Left cardiac atrium (tissue), 4 donors: ENCODE measurements at regions of chr18 and their contacts with region 1.

Region 1: GRCh38 chr18:62584241-62585120 is 61.7 kb downstream of the ZCCHC2 start:
- DNase-seq: peak; percentile 85
- ATAC-seq: peak; percentile 88 to 93

Region 2: GRCh38 chr18:61581578-61582201 is 1002.8 kb before region 1 on chr18:
- intact Hi-C with region 1: no loop called
- DNase-seq: peak; percentile 79
- ATAC-seq: peak; percentile 88 to 96

Region 3: GRCh38 chr18:62693659-62694058 is 109.2 kb after region 1 on chr18:
- intact Hi-C with region 1: no loop called
- DNase-seq: no peak
- ATAC-seq: no peak

Region 4: DNA sequence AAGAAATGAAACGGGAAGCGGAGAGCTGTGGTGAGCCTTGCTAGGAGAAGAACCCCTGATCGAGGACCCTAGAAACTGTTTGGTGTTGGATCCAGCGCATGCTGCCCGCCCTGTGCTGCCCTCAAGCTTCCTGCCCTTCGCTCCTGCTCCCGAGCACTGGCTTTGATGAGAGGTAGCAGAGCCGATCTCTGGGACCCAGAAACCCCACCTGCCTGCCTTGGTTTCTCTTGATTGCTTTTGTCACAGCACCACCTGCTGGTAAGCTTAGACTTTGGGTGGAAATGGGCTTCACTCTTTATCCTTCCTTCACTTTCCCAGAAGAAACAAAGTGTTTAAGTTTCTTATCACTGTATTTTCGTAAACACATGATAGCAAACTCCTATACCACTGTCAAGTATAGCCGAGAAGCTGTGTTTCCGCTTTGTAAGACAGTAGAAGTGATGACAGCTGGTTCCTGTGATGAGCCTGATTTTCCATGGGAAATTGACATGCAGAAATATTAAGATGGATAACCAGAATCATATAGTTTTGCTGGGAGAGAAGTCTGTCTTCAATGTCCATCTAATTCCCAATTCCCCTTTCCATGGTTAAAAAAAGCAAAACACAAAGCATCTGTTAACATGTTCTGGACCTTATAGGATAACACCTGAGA is 398.2 kb after region 1 on chr18:
- intact Hi-C with region 1: loop called (anchors 1 to 5 kb)
- DNase-seq: peak; percentile 54
- ATAC-seq: peak; percentile 73 to 80